ENCODE measurements at regions of chr1 and their contacts with region 1.

Region 1: GRCh38 chr1:224333309-224333926 is 3.4 kb upstream of the NVL start:
- DNase-seq: peak; percentile 18
- H3K4me3 ChIP-seq: no peak overlapping the region
- H3K27me3 ChIP-seq: no peaks in the 10 kb centered on the region
- CTCF ChIP-seq: peak; percentile 65

Region 2: GRCh38 chr1:224116131-224116530 is 217.3 kb before region 1 on chr1:
- CTCF ChIA-PET with region 1: interaction called, 22 read pairs
- POLR2A ChIA-PET with region 1: no interaction called
- DNase-seq: no peak
- H3K4me3 ChIP-seq: no peak overlapping the region
- H3K27me3 ChIP-seq: no peaks in the 10 kb centered on the region
- CTCF ChIP-seq: no peak

Region 3: GRCh38 chr1:224497714-224498573 is 164.5 kb after region 1 on chr1:
- CTCF ChIA-PET with region 1: no interaction called
- POLR2A ChIA-PET with region 1: no interaction called
- DNase-seq: peak; percentile 54
- H3K4me3 ChIP-seq: no peak overlapping the region
- H3K27me3 ChIP-seq: no peaks in the 10 kb centered on the region
- CTCF ChIP-seq: 0 out of 2 replicates have a peak, but pooled peaks have one; percentile 4

Measured in BJ (cell line).